Activated B cell treated with CpG ODN at 0.5 μM for 24 hours (primary cell): ENCODE measurements at regions of chr22 and their contacts with region 1.

Region 1: GRCh38 chr22:46035742-46036557 is 59.0 kb upstream of the WNT7B start:
- DNase-seq: peak; percentile 99
- ATAC-seq: peak; percentile 94
- H3K4me3 Mint-ChIP-seq: peak overlapping the region; percentile 88
- H3K27ac Mint-ChIP-seq: peak overlapping the region; percentile 92
- H3K4me1 Mint-ChIP-seq: peaks cover 18% of the 10 kb centered on the region
- H3K27me3 Mint-ChIP-seq: no peaks in the 10 kb centered on the region
- CTCF ChIP-seq: no peak

Region 2: GRCh38 chr22:45994491-45995404 is 41.2 kb before region 1 on chr22:
- CTCF ChIA-PET with region 1: interaction called, 3 read pairs
- POLR2A ChIA-PET with region 1: no interaction called
- intact Hi-C with region 1: loop called (anchors 5 kb)
- DNase-seq: peak; percentile 79
- ATAC-seq: peak; percentile 51
- H3K4me3 Mint-ChIP-seq: no peak overlapping the region
- H3K27ac Mint-ChIP-seq: no peak overlapping the region
- H3K4me1 Mint-ChIP-seq: peaks cover 26% of the 10 kb centered on the region
- H3K27me3 Mint-ChIP-seq: peaks cover 2% of the 10 kb centered on the region
- CTCF ChIP-seq: peak; percentile 24

Region 3: GRCh38 chr22:46013460-46014416 is 22.2 kb before region 1 on chr22:
- CTCF ChIA-PET with region 1: interaction called, 19 read pairs
- POLR2A ChIA-PET with region 1: interaction called, 34 read pairs
- intact Hi-C with region 1: loop called (anchors 1 kb)
- DNase-seq: peak; percentile 79
- ATAC-seq: peak; percentile 97
- H3K4me3 Mint-ChIP-seq: peak overlapping the region; percentile 91
- H3K27ac Mint-ChIP-seq: peak overlapping the region; percentile 82
- H3K4me1 Mint-ChIP-seq: peaks cover 7% of the 10 kb centered on the region
- H3K27me3 Mint-ChIP-seq: no peaks in the 10 kb centered on the region
- CTCF ChIP-seq: no peak

Region 4: GRCh38 chr22:46057762-46058420 is 21.9 kb after region 1 on chr22:
- CTCF ChIA-PET with region 1: no interaction called
- POLR2A ChIA-PET with region 1: interaction called, 51 read pairs
- intact Hi-C with region 1: loop called (anchors 1 kb)
- DNase-seq: no peak
- ATAC-seq: peak; percentile 76
- H3K4me3 Mint-ChIP-seq: peak overlapping the region; percentile 65
- H3K27ac Mint-ChIP-seq: peak overlapping the region; percentile 91
- H3K4me1 Mint-ChIP-seq: peaks cover 51% of the 10 kb centered on the region
- H3K27me3 Mint-ChIP-seq: no peaks in the 10 kb centered on the region
- CTCF ChIP-seq: no peak

Region 5: GRCh38 chr22:46296257-46297150 is 260.6 kb after region 1 on chr22 and contains the start of gene GTSE1:
- CTCF ChIA-PET with region 1: no interaction called
- POLR2A ChIA-PET with region 1: interaction called, 7 read pairs
- intact Hi-C with region 1: loop called (anchors 2 kb)
- DNase-seq: peak; percentile 87
- ATAC-seq: peak; percentile 97
- H3K4me3 Mint-ChIP-seq: peak within 1 kb of the TSS; percentile 89
- H3K27ac Mint-ChIP-seq: peak within 1 kb of the TSS; percentile 98
- H3K4me1 Mint-ChIP-seq: peaks cover 48% of the 10 kb centered on the region
- H3K27me3 Mint-ChIP-seq: no peaks in the 10 kb centered on the region
- CTCF ChIP-seq: no peak
- total RNA-seq, gene GTSE1: 0.34 and 0.95 TPM in 2 replicates

Region 6: DNA sequence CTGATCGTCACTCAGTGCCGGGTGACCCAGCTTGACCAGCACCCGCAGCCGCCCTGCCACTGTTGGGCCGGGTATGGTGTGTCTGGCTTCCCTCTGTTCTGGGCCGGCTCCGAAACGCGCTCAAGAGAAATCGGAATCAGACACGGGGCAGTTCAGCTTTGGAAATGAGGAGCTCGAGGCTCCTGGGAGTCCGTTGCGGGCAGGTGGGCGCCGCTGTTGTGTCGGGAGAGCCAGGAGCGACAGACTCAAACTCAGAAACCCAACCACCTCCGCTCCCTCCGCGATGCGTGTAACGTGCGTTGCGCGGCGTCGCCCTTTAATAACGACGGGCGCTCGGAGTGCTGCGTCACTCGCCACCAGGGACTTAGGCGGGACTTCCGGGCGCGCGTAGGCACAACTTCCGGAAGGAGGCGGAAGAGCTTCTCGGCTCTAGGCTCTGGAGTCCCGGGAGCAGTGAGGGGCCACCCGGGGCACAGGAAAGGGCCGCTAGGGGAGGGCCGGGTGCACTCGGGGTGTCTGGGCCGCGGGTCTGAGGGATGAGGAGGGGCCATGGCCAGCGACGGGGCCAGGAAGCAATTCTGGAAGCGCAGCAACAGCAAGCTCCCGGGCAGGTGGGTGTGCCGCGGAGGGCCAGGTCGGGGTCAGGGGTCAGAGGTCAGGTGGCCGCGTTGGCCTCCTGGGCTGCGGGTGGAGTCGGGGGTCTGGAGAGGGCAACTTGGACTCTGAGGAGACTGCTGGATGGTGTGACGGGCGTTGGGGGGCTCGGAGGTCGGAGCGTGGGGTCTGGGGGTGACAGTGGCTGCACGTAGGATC is 726.5 kb after region 1 on chr22 and contains the start of gene TBC1D22A:
- CTCF ChIA-PET with region 1: no interaction called
- POLR2A ChIA-PET with region 1: interaction called, 3 read pairs
- intact Hi-C with region 1: loop called (anchors 10 kb)
- DNase-seq: peak; percentile 93
- ATAC-seq: peak; percentile 72
- H3K4me3 Mint-ChIP-seq: peak within 1 kb of the TSS; percentile 99
- H3K27ac Mint-ChIP-seq: peak within 1 kb of the TSS; percentile 99
- H3K4me1 Mint-ChIP-seq: peaks cover 63% of the 10 kb centered on the region
- H3K27me3 Mint-ChIP-seq: no peaks in the 10 kb centered on the region
- CTCF ChIP-seq: no peak
- total RNA-seq, gene TBC1D22A: 73.0 and 85.9 TPM in 2 replicates